Activated naive CD4-positive, alpha-beta T cell treated with anti-CD3 and anti-CD28 coated beads for 36 hours (primary cell): ENCODE measurements at regions of chr2 and their contacts with region 1.

Region 1: GRCh38 chr2:20097879-20098714 is 46.7 kb upstream of the LAPTM4A start:
- DNase-seq: peak; percentile 88
- H3K4me3 Mint-ChIP-seq: no peak overlapping the region
- H3K27ac Mint-ChIP-seq: no peak overlapping the region
- H3K4me1 Mint-ChIP-seq: peaks cover 3% of the 10 kb centered on the region
- H3K27me3 Mint-ChIP-seq: peaks cover 10% of the 10 kb centered on the region

Region 2: GRCh38 chr2:18749912-18750526 is 1348.1 kb before region 1 on chr2:
- CTCF ChIA-PET with region 1: no interaction called
- intact Hi-C with region 1: loop called (anchors 5 kb)
- DNase-seq: peak; percentile 75
- H3K4me3 Mint-ChIP-seq: no peak overlapping the region
- H3K27ac Mint-ChIP-seq: no peak overlapping the region
- H3K4me1 Mint-ChIP-seq: no peaks in the 10 kb centered on the region
- H3K27me3 Mint-ChIP-seq: no peaks in the 10 kb centered on the region

Region 3: DNA sequence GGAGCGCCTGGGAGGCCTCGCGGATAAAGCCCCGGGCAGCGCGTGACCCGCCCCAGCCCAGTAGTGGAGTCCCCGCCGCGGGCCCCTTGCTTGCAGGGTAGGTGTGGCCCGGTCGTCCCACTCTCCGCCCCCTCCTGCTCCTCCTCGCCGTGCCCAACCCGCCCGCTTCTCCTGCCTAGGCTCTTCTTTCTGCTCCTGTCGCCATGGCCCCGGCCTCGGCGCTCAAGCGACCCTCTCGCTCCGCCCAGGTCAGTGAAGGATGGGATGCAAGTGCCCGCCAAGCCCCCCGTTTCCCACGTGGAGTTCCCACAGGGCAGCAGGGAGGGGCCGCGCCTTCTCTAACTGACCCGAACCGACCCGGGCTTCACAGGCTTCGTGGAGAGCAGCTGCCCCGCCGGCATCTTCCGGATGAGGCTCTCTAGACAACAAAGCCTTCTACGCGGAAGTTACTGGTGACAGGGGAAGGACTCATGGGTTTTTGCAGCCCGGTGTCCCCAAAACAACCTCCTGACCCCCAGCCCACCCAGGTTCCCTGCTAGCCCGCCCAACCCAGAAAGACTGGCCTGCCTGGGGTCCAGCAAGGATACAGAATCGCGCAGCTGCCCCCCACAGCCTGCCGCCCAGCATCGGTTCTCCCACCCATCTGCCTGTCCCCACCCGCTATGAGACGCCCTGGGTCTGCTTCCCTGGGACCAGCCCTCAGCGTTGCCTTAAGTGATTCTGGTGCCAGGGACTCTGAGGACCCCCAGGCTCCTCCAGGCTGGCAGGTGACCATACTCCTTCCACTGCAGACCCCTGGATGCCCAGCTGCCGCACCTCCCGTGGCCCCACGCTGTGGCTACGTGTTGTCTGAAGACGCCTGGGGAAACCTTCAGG is 229.2 kb before region 1 on chr2:
- CTCF ChIA-PET with region 1: no interaction called
- intact Hi-C with region 1: loop called (anchors 5 kb)
- DNase-seq: peak; percentile 67
- H3K4me3 Mint-ChIP-seq: peak overlapping the region; percentile 83
- H3K27ac Mint-ChIP-seq: peak overlapping the region; percentile 47
- H3K4me1 Mint-ChIP-seq: peaks cover 22% of the 10 kb centered on the region
- H3K27me3 Mint-ChIP-seq: no peaks in the 10 kb centered on the region

Region 4: DNA sequence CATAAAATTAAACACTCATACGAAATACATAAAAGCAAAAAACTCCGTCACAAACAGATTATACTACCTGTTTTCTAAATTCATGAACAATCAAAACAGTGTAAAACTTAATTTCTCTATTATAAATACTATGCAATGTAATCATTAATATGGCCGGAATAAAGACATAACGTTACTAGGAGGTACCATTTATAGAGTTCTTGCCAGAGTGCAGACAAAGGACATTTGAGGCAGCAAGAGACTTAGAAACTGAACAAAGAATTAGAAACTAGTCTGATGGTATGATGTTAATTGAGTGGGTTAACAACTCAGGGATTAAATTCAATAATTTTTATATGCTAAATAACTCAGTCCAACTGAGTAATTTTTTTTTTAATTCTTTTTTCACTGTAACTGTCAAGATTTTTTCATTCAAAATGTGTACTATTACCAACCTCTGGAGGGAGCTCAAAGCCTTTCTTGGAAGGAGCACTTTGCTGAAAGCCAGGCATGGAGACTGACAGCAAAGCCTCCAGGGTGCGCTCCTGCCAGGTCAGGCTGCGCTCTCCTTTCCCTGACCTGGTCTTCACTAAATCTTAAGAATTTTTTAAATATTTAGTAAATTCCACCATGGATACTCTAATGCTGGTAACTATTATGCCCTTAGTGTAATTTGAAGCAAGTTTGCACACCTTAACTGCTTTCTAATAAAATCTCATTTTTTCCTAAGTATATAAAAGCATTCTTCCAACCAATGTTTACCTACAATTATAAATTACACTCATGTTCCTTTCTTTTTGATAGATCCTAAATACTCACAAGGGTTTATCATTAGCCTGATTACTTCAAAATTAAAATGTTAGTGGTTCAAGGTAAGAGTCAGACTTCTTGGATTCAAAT is 142.3 kb before region 1 on chr2:
- CTCF ChIA-PET with region 1: interaction called, 3 read pairs
- intact Hi-C with region 1: loop called (anchors 1 kb)
- DNase-seq: peak; percentile 68
- H3K4me3 Mint-ChIP-seq: no peak overlapping the region
- H3K27ac Mint-ChIP-seq: no peak overlapping the region
- H3K4me1 Mint-ChIP-seq: no peaks in the 10 kb centered on the region
- H3K27me3 Mint-ChIP-seq: no peaks in the 10 kb centered on the region